AG04450 (cell line): ENCODE measurements at regions of chr19 and their contacts with region 1.

Region 1: DNA sequence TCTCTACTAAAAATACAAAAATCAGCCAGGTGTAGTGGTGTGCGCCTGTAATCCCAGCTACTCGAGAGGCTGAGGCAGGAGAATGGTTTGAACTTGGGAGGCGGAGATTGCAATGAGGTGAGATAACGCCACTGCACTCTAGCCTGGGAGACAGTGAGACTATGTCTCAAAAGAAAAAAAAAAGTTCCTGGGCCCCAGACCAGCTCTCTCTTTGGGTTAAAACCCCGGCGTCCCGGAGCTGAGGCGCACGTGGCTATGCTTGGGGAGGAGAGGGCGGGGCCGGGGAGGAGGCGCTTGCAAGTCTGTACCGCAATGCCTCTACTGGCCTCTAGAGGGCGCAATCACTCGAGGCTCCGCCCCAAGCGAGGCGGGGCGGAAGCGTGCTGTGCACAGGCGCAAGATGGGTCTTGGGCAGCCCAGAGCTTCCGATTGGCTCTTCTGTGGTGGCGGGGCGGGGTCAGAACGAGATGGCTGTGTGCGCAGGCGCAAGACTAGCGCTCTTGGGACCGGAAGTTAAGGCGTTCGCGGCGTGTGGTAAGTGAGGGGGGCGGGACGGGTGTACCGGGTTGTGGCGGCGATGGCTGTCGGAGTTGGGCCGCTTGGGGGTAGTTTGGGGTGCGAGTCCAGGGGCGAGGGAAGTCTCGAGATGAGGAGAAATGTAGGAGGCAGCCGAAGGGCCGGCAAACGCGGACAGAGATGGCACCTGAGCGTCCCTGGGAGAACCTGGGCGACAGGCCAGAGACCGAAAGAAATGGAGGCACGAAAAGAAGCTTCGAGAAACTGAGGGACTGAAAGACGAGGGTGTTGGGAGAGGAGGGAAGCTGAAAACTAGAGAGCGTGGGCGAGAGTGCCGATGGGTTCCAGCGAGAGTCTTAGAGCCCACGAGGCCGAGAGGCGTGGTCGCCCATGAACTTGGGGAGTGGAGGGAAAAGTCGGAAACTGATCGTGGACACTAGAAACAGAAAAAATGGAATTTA is at the start of gene DHX34:
- DNase-seq: peak; percentile 99
- H3K4me3 ChIP-seq: peak within 1 kb of the TSS; percentile 76
- H3K27ac ChIP-seq: no peak within 1 kb of the TSS
- H3K27me3 ChIP-seq: no peaks in the 10 kb centered on the region
- CTCF ChIP-seq: peak; percentile 96
- polyA plus RNA-seq, gene DHX34: 4.2 and 6.0 TPM in 2 replicates

Region 2: DNA sequence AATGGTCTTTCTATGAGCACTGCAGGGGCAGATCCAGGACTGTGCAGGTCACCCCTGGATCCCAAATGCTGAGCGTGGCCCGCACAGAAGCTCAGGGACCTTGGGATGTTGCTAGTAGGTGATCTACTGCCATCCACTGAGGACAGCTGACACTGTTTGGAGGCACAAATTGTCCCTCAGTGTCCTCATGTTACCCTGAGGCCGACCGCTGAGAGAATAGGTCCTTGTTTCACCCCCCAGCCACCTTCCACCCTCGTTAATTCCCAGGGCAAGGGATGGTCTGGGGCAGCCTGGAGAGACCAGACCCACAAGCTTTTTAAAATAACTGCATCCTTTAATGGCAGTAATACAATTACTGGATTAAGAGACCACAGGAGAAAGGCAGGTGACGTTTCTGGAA is 285.2 kb before region 1 on chr19:
- CTCF ChIA-PET with region 1: no interaction called
- POLR2A ChIA-PET with region 1: no interaction called
- DNase-seq: no peak
- H3K4me3 ChIP-seq: no peak overlapping the region
- H3K27ac ChIP-seq: no peak overlapping the region
- H3K27me3 ChIP-seq: no peaks in the 10 kb centered on the region
- CTCF ChIP-seq: no peak

Region 3: DNA sequence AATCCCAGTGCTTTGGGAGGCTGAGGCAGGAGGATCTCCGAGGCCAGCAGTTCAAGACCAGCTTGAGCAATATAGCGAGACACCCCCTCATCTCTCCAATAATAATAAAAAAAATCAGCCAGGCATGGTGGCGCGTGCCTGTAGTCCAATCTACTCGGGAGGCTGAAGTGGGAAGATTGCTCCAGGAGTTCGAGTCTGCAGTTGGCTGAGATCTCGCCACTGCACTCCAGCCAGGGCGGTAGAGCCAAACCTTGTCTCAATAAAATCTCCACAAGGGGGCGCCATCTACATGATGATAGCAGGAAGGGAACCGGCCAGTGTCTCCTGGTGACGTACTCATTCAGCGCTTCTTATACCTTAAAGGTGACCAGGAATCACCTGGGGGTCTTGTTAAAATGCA is 53.1 kb before region 1 on chr19:
- CTCF ChIA-PET with region 1: interaction called, 19 read pairs
- POLR2A ChIA-PET with region 1: interaction called, 3 read pairs
- DNase-seq: peak; percentile 50
- H3K4me3 ChIP-seq: no peak overlapping the region
- H3K27ac ChIP-seq: no peak overlapping the region
- H3K27me3 ChIP-seq: no peaks in the 10 kb centered on the region
- CTCF ChIP-seq: peak; percentile 76

Region 4: GRCh38 chr19:47315125-47315821 is 33.8 kb before region 1 on chr19:
- CTCF ChIA-PET with region 1: interaction called, 19 read pairs
- POLR2A ChIA-PET with region 1: interaction called, 5 read pairs
- DNase-seq: peak; percentile 77
- H3K4me3 ChIP-seq: no peak overlapping the region
- H3K27ac ChIP-seq: peak overlapping the region; percentile 65
- H3K27me3 ChIP-seq: no peaks in the 10 kb centered on the region
- CTCF ChIP-seq: no peak

Region 5: GRCh38 chr19:47330466-47330869 is 18.6 kb before region 1 on chr19:
- CTCF ChIA-PET with region 1: interaction called, 48 read pairs
- POLR2A ChIA-PET with region 1: interaction called, 5 read pairs
- DNase-seq: peak; percentile 30
- H3K4me3 ChIP-seq: no peak overlapping the region
- H3K27ac ChIP-seq: peak overlapping the region; percentile 80
- H3K27me3 ChIP-seq: peaks cover 5% of the 10 kb centered on the region
- CTCF ChIP-seq: 0 out of 2 replicates have a peak, but pooled peaks have one; percentile 6

Region 6: GRCh38 chr19:47370045-47370611 is 21.0 kb after region 1 on chr19:
- CTCF ChIA-PET with region 1: interaction called, 28 read pairs
- POLR2A ChIA-PET with region 1: interaction called, 3 read pairs
- DNase-seq: peak; percentile 23
- H3K4me3 ChIP-seq: no peak overlapping the region
- H3K27ac ChIP-seq: peak overlapping the region; percentile 52
- H3K27me3 ChIP-seq: no peaks in the 10 kb centered on the region
- CTCF ChIP-seq: no peak

Region 7: DNA sequence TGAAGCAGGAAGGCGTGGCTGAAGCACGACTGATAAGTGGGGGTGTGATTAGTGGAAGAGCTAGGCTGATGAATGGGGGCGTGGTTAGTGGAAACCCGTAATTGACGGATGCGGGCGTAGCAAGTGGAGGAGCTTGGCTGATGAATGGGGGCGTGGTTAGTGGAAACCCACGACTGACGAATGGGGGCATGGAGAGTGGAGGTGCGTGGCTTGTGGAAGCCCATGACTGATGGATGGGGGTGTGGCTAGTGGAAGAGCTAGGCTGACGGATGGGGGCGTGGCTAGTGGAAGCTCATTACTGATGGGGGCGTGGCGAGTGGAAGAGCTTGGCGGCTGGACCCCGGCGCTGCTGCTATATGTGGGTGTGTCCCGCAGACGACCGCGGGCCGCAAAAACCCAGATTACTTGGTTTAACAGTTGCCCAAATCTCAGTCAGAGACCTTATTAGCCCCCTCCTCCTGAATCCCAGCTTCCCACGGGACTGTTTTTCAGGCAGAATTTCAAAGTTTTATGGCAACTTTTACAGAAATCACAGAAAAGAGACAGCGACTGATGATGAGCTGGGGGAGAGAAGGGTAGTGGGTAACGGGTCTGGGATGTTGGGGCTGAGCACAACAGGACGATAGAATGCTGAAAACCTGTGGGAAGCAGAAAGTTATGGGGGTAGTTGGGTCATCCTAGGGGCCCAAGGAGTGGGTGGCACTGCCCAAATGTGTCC is 79.2 kb after region 1 on chr19:
- CTCF ChIA-PET with region 1: interaction called, 10 read pairs
- POLR2A ChIA-PET with region 1: no interaction called
- DNase-seq: peak; percentile 92
- H3K4me3 ChIP-seq: peak overlapping the region; percentile 50
- H3K27ac ChIP-seq: peak overlapping the region; percentile 11
- H3K27me3 ChIP-seq: peaks cover 10% of the 10 kb centered on the region
- CTCF ChIP-seq: no peak

Region 8: GRCh38 chr19:47637550-47637949 is 288.4 kb after region 1 on chr19:
- CTCF ChIA-PET with region 1: no interaction called
- POLR2A ChIA-PET with region 1: no interaction called
- DNase-seq: no peak
- H3K4me3 ChIP-seq: no peak overlapping the region
- H3K27ac ChIP-seq: peak overlapping the region; percentile 52
- H3K27me3 ChIP-seq: no peaks in the 10 kb centered on the region
- CTCF ChIP-seq: no peak